ENCODE measurements at regions of chr9 and their contacts with region 1.

Region 1: GRCh38 chr9:138100711-138101349 is 223.2 kb downstream of the CACNA1B start:
- DNase-seq: no peak
- H3K4me3 ChIP-seq: no peak overlapping the region
- H3K27ac ChIP-seq: no peak overlapping the region
- H3K4me1 ChIP-seq: no peaks in the 10 kb centered on the region
- H3K27me3 ChIP-seq: no peaks in the 10 kb centered on the region
- CTCF ChIP-seq: no peak

Region 2: GRCh38 chr9:137705443-137706293 is 395.2 kb before region 1 on chr9:
- CTCF ChIA-PET with region 1: no interaction called
- dilution Hi-C with region 1: loop called (anchors 10 kb)
- in situ Hi-C with region 1: no loop called
- intact Hi-C with region 1: no loop called
- DNase-seq: no peak
- H3K4me3 ChIP-seq: no peak overlapping the region
- H3K27ac ChIP-seq: no peak overlapping the region
- H3K4me1 ChIP-seq: peaks cover 30% of the 10 kb centered on the region
- H3K27me3 ChIP-seq: no peaks in the 10 kb centered on the region
- CTCF ChIP-seq: no peak

Region 3: GRCh38 chr9:137918331-137919094 is 182.3 kb before region 1 on chr9:
- CTCF ChIA-PET with region 1: no interaction called
- dilution Hi-C with region 1: loop called (anchors 10 kb)
- in situ Hi-C with region 1: no loop called
- intact Hi-C with region 1: no loop called
- DNase-seq: no peak
- H3K4me3 ChIP-seq: no peak overlapping the region
- H3K27ac ChIP-seq: no peak overlapping the region
- H3K4me1 ChIP-seq: no peaks in the 10 kb centered on the region
- H3K27me3 ChIP-seq: no peaks in the 10 kb centered on the region
- CTCF ChIP-seq: no peak

Region 4: GRCh38 chr9:137989999-137990715 is 110.7 kb before region 1 on chr9:
- CTCF ChIA-PET with region 1: no interaction called
- dilution Hi-C with region 1: loop called (anchors 10 kb)
- in situ Hi-C with region 1: no loop called
- intact Hi-C with region 1: no loop called
- DNase-seq: peak; percentile 11
- H3K4me3 ChIP-seq: no peak overlapping the region
- H3K27ac ChIP-seq: no peak overlapping the region
- H3K4me1 ChIP-seq: no peaks in the 10 kb centered on the region
- H3K27me3 ChIP-seq: no peaks in the 10 kb centered on the region
- CTCF ChIP-seq: no peak

Region 5: GRCh38 chr9:138038244-138038671 is 62.6 kb before region 1 on chr9:
- CTCF ChIA-PET with region 1: no interaction called
- dilution Hi-C with region 1: no loop called
- in situ Hi-C with region 1: no loop called
- intact Hi-C with region 1: no loop called
- DNase-seq: no peak
- H3K4me3 ChIP-seq: no peak overlapping the region
- H3K27ac ChIP-seq: no peak overlapping the region
- H3K4me1 ChIP-seq: no peaks in the 10 kb centered on the region
- H3K27me3 ChIP-seq: no peaks in the 10 kb centered on the region
- CTCF ChIP-seq: no peak